ENCODE measurements at regions of chr15 and their contacts with region 1.

Region 1: DNA sequence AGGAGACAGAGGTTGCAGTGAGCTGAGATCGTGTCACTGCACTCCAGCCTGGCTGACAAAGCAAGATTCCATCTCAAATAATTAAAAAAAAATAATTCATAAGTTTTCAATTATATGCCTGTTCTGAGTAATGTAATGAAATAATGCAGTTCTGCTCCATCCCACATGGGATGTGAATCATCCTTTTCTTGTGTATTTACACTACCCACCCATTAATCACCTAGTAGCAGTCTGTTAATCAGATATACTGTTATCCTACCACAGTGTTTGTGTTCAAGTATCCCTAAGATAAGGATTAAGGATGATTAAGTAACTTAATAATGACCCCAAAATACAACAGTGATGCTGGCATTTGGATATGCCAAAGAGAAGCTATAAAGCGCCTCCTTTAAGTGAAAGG is 38.8 kb downstream of the PIGB start:
- DNase-seq: peak; percentile 64
- H3K4me3 ChIP-seq: no peak overlapping the region
- H3K27ac ChIP-seq: no peak overlapping the region
- H3K4me1 ChIP-seq: peaks cover 13% of the 10 kb centered on the region
- H3K27me3 ChIP-seq: no peaks in the 10 kb centered on the region
- CTCF ChIP-seq: no peak
- POLR2A ChIP-seq: no peak

Region 2: GRCh38 chr15:55318588-55319494 is 38.9 kb before region 1 on chr15 and contains the starts of genes PIGB and PIGBOS1:
- CTCF ChIA-PET with region 1: interaction called, 3 read pairs
- POLR2A ChIA-PET with region 1: interaction called, 3 read pairs
- dilution Hi-C with region 1: no loop called
- intact Hi-C with region 1: loop called (anchors 2 kb)
- DNase-seq: peak; percentile 92
- H3K4me3 ChIP-seq: peak within 1 kb of the TSS; percentile 45 to 83 (median 77)
- H3K27ac ChIP-seq: peak within 1 kb of the TSS; percentile 74
- H3K4me1 ChIP-seq: peaks cover 9% of the 10 kb centered on the region
- H3K27me3 ChIP-seq: no peaks in the 10 kb centered on the region
- CTCF ChIP-seq: no peak
- POLR2A ChIP-seq: peak; percentile 77
- total RNA-seq, gene PIGB: 11.8 and 14.1 TPM in 2 replicates
- total RNA-seq, gene PIGBOS1: 12.8 and 15.1 TPM in 2 replicates

Region 3: GRCh38 chr15:55372701-55373440 is 15.1 kb after region 1 on chr15:
- CTCF ChIA-PET with region 1: interaction called, 21 read pairs
- POLR2A ChIA-PET with region 1: no interaction called
- dilution Hi-C with region 1: no loop called
- intact Hi-C with region 1: no loop called
- DNase-seq: peak; percentile 71
- H3K4me3 ChIP-seq: no peak overlapping the region
- H3K27ac ChIP-seq: peak overlapping the region; percentile 42
- H3K4me1 ChIP-seq: peaks cover 16% of the 10 kb centered on the region
- H3K27me3 ChIP-seq: no peaks in the 10 kb centered on the region
- CTCF ChIP-seq: no peak
- POLR2A ChIP-seq: no peak